ENCODE measurements at regions of chr2 and their contacts with region 1.

Region 1: DNA sequence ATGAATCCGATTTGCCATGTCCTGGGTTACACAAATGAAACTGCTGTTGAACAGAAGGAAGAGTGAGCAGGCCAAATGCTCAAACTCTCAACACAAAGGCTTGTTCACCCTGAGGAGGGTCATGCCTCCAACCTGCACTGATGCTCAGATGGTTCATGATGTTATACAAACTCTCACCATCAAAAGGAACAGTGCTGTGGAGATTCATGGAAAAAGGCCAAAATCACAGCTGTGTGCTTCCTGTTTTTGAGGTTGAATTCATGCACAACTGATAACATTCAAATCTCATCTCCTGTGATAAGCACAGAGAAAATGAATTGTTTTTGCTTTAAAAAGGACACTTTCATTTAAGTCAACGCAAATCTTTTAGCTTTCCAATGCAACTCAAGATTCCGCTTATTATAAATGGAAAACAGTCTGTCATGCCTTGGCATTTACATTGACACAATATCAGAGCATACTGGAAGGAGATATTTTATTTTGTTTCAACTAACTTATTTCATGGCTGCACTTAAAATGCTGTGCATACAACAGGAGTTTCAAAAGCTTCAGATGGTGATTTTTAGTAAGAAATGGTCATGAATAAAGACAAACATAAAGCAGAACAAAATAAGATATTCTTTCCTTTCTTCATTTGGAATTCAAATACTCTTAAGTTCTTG is 22.2 kb upstream of the TTN start:
- DNase-seq: no peak
- ATAC-seq: peak; percentile 28 to 45 (median 32)
- H3K4me3 ChIP-seq: peak overlapping the region in 1 of 12 donors; percentile 24
- H3K27ac ChIP-seq: peak overlapping the region in 8 of 12 donors; percentile 1 to 66 (median 24)
- H3K4me1 ChIP-seq: peaks cover 0 to 39% (median 25%) of the 10 kb centered on the region in 12 donors
- H3K27me3 ChIP-seq: no peaks in the 10 kb centered on the region
- CTCF ChIP-seq: peak in 1 of 12 donors; percentile 7
- POLR2A ChIP-seq: no peak

Region 2: GRCh38 chr2:178756843-178757242 is 72.6 kb before region 1 on chr2:
- intact Hi-C with region 1: no loop called
- DNase-seq: no peak
- ATAC-seq: peak; percentile 26 to 61 (median 36)
- H3K4me3 ChIP-seq: no peak overlapping the region
- H3K27ac ChIP-seq: no peak overlapping the region
- H3K4me1 ChIP-seq: peaks cover 0 to 23% (median 0%) of the 10 kb centered on the region in 12 donors
- H3K27me3 ChIP-seq: no peaks in the 10 kb centered on the region
- CTCF ChIP-seq: no peak
- POLR2A ChIP-seq: no peak

Region 3: GRCh38 chr2:178863856-178864620 is 34.6 kb after region 1 on chr2:
- intact Hi-C with region 1: loop called in 2 of 10 experiments (anchors 5 kb)
- DNase-seq: peak; percentile 82 to 92 (median 85)
- ATAC-seq: peak; percentile 84 to 89 (median 88)
- H3K4me3 ChIP-seq: peak overlapping the region in 9 of 12 donors; percentile 8 to 34 (median 21)
- H3K27ac ChIP-seq: peak overlapping the region; percentile 73 to 96 (median 92)
- H3K4me1 ChIP-seq: peaks cover 4 to 68% (median 48%) of the 10 kb centered on the region in 12 donors
- H3K27me3 ChIP-seq: no peaks in the 10 kb centered on the region
- CTCF ChIP-seq: no peak
- POLR2A ChIP-seq: peak in 1 of 2 donors; percentile 45

Region 4: DNA sequence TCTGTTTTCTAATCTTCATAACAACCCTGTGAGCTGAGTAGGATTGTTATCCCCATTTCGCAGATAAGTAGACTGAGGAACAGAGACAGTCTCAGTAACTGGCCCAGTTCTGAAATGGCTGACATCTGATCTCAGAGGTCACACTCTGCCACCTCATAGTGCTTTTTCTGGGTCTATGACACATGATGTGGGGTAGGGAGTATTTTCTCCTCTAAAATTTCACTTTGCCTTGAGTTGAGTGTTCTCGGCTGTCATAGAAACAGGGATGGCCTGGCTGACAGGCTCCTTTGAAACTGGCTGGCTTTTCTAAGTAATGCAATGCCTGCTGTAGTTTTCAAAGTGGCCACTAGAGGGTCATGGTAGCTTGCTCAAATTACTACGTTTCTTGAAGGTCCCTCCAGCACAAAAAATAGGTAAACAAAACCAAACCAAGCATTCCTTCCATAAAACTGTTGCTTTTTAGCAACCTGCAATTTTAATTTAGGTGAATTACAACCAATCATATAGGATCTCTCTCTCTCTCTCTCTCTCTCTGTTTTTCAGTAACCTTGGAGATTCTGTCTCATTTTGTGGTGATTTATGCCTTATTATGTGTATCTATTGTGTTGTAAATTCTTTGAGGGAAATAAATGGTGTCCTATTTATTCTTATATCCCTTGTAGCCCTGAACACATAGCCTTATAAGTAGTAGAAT is 62.0 kb after region 1 on chr2:
- intact Hi-C with region 1: loop called in 1 of 10 experiments (anchors 5 kb)
- DNase-seq: peak in 4 of 5 donors; percentile 46 to 63 (median 49)
- ATAC-seq: peak; percentile 51 to 67 (median 60)
- H3K4me3 ChIP-seq: no peak overlapping the region
- H3K27ac ChIP-seq: peak overlapping the region in 10 of 12 donors; percentile 8 to 65 (median 28)
- H3K4me1 ChIP-seq: peaks cover 0 to 41% (median 13%) of the 10 kb centered on the region in 12 donors
- H3K27me3 ChIP-seq: no peaks in the 10 kb centered on the region
- CTCF ChIP-seq: peak; percentile 86 to 96 (median 94)
- POLR2A ChIP-seq: no peak

Region 5: DNA sequence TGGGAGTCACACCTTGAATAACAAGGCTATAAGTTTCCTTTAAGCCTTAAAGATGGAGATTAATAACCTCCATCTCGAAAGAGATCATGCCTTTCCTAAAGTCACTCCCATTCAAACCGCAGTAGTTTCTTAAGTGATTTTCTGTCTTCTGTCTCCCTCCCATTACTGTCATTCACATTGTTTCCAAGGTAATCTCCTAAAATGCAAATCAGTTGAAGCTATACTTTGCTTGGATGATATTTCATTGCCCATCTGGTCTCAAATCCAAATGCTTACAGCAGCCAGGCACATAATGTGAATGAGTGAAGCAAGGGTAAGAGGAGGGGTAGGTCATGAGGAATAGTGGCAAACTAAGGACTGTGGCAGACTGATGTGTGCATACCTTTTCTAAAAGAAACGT is 104.1 kb after region 1 on chr2:
- intact Hi-C with region 1: no loop called
- DNase-seq: no peak
- ATAC-seq: no peak
- H3K4me3 ChIP-seq: no peak overlapping the region
- H3K27ac ChIP-seq: no peak overlapping the region
- H3K4me1 ChIP-seq: peaks cover 0 to 2% (median 0%) of the 10 kb centered on the region in 12 donors
- H3K27me3 ChIP-seq: no peaks in the 10 kb centered on the region
- CTCF ChIP-seq: no peak
- POLR2A ChIP-seq: no peak

Measured in heart left ventricle (tissue), 16 donors.